ENCODE measurements at regions of chr7 and their contacts with region 1.

Region 1: DNA sequence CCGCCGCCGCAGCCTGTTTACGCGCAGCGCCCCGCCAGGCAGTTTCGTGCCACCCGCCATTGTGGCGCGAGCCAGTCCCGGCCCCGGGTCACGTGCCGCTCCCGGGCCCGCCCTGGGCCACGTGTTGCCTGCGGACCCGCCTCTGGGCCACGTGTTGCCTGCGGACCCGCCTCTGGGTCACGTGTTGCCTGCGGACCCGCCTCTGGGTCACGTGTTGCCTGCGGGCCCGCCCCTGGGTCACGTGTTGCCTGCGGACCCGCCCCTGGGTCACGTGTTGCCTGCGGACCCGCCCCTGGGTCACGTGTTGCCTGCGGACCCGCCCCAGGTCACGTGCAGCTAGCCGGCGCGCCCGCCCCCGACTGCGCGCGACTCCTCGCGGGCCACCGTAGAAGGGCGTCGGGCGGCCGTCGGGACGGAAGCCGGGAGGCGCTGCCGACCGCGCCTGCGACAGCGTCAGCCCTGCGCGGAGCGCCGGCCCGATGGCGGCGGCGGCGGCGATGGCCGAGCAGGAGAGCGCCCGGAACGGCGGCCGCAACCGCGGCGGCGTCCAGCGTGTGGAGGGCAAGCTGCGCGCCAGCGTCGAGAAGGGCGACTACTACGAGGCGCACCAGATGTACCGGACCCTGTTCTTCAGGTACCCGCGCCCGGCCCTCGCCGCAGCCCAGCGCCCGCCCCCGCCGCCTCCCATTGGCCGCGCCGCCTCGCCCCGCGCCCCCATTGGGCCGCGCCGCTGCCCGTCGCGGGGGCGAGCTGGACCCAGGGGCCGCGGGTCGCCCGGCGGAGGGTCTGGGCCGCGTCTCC is at the start of gene GET4:
- DNase-seq: peak; percentile 79 to 96
- ATAC-seq: peak; percentile 87 to 89
- H3K4me3 ChIP-seq: peak within 1 kb of the TSS; percentile 69
- H3K27ac ChIP-seq: peak within 1 kb of the TSS; percentile 93 to 97
- H3K4me1 ChIP-seq: peaks cover 22% of the 10 kb centered on the region
- CTCF ChIP-seq: no peak; the same call in 2 of the 3 replicates
- EP300 ChIP-seq: no peak
- POLR2A ChIP-seq: peak; percentile 79
- RAD21 ChIP-seq: no peak
- polyA plus RNA-seq, gene GET4: 21.5 and 26.1 TPM in 2 replicates

Region 2: GRCh38 chr7:604001-604883 is 272.1 kb before region 1 on chr7:
- CTCF ChIA-PET with region 1: no interaction called
- POLR2A ChIA-PET with region 1: no interaction called
- DNase-seq: no peak
- ATAC-seq: peak in 1 of 2 experiments; percentile 32; a peak in 2 of 6 replicates
- H3K4me3 ChIP-seq: no peak overlapping the region
- H3K27ac ChIP-seq: peak overlapping the region in 1 of 2 experiments; percentile 24; a peak in 1 of 6 replicates
- H3K4me1 ChIP-seq: no peaks in the 10 kb centered on the region
- CTCF ChIP-seq: no peak
- EP300 ChIP-seq: no peak
- POLR2A ChIP-seq: no peak
- RAD21 ChIP-seq: no peak

Region 3: DNA sequence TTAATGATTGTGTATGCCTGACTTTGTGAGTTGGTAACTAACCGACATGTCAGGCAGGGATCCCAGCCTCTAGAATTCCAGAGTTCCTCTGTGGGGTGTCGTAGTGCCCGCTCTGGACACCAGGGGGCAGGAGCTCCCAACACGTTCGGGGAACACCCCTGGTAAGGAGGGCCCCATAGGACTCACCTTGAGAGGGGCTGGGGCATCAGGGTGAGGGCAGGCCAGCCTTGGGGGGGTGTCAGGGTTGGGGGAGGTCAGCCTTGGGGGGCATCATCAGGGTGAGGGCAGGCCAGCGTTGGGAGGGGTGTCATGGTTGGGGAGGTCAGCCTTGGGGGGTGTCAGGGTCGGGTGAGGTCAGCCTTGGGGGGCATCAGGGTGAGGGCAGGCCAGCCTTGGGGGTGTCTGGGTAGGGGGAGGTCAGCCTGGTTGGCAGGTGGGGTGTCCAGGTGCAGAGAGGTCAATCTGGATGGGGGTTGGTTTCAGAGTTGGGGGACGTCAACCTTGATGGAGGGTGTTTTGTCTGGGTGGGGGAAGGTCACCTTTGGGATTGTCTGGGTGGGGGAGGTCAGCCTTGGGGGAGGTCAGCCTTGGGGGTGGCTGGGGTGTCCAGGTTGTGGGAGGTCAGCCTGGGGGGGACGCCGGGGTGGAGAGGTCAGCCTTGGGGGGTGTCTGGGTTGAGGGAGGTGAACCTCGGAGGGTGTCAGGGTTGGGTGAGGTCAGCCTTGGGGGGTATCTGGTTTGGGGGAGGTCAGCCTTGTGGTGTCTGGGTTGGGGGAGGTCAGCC is 89.7 kb before region 1 on chr7:
- CTCF ChIA-PET with region 1: interaction called, 117 read pairs
- POLR2A ChIA-PET with region 1: no interaction called
- DNase-seq: peak; percentile 56 to 84
- ATAC-seq: peak; percentile 81 to 90
- H3K4me3 ChIP-seq: no peak overlapping the region
- H3K27ac ChIP-seq: 0 out of 6 replicates have a peak overlapping the region, but pooled peaks of 1 of the 2 experiments have one; percentile 31
- H3K4me1 ChIP-seq: no peaks in the 10 kb centered on the region
- CTCF ChIP-seq: peak; percentile 68
- EP300 ChIP-seq: no peak
- POLR2A ChIP-seq: no peak
- RAD21 ChIP-seq: peak; percentile 79 to 83

Region 4: GRCh38 chr7:831596-832166 is 44.7 kb before region 1 on chr7:
- CTCF ChIA-PET with region 1: interaction called, 39 read pairs
- POLR2A ChIA-PET with region 1: interaction called, 4 read pairs
- DNase-seq: peak; percentile 71 to 73
- ATAC-seq: peak; percentile 76 to 79
- H3K4me3 ChIP-seq: no peak overlapping the region; the same call in 2 of the 3 replicates
- H3K27ac ChIP-seq: peak overlapping the region; percentile 13 to 64; a peak in 4 of 6 replicates
- H3K4me1 ChIP-seq: peaks cover 36% of the 10 kb centered on the region
- CTCF ChIP-seq: no peak
- EP300 ChIP-seq: no peak
- POLR2A ChIP-seq: no peak
- RAD21 ChIP-seq: no peak

Region 5: GRCh38 chr7:851204-851603 is 25.2 kb before region 1 on chr7:
- CTCF ChIA-PET with region 1: interaction called, 14 read pairs
- POLR2A ChIA-PET with region 1: no interaction called
- DNase-seq: no peak
- ATAC-seq: no peak
- H3K4me3 ChIP-seq: no peak overlapping the region
- H3K27ac ChIP-seq: no peak overlapping the region
- H3K4me1 ChIP-seq: no peaks in the 10 kb centered on the region
- CTCF ChIP-seq: no peak
- EP300 ChIP-seq: no peak
- POLR2A ChIP-seq: no peak
- RAD21 ChIP-seq: no peak